Dendritic cell treated with granulocyte-macrophage colony-stimulating factor and Interleukin-4, amounts not matched to agents 40 ng/mL and 50 ng/mL, for 4 days (primary cell): ENCODE measurements at regions of chr2 and their contacts with region 1.

Region 1: GRCh38 chr2:167212014-167212648 is 323.9 kb downstream of the XIRP2 start:
- H3K4me3 Mint-ChIP-seq: no peak overlapping the region
- H3K27ac Mint-ChIP-seq: no peak overlapping the region
- H3K4me1 Mint-ChIP-seq: no peaks in the 10 kb centered on the region
- H3K27me3 Mint-ChIP-seq: no peaks in the 10 kb centered on the region

Region 2: GRCh38 chr2:166539340-166540162 is 672.6 kb before region 1 on chr2:
- intact Hi-C with region 1: loop called (anchors 1 kb)
- H3K4me3 Mint-ChIP-seq: no peak overlapping the region
- H3K27ac Mint-ChIP-seq: no peak overlapping the region
- H3K4me1 Mint-ChIP-seq: peaks cover 4% of the 10 kb centered on the region
- H3K27me3 Mint-ChIP-seq: no peaks in the 10 kb centered on the region

Region 3: DNA sequence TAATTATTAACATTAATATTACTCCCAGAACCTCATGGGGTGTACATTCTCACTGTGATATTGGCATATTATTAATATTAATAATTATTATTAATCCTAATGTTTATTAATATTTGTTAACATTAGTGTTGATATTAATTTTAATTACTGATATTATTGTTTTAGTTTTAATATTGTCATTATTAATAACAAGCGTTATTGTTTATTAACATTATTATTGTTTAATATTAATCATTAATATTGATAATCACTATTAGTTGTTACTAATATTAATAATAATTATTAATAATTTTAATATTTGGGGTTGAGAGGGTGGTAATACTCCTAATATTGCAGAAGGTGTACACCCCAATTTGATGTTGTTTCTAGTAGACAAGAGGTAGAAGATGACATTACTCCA is 517.0 kb before region 1 on chr2:
- intact Hi-C with region 1: loop called (anchors 5 kb)
- H3K4me3 Mint-ChIP-seq: no peak overlapping the region
- H3K27ac Mint-ChIP-seq: no peak overlapping the region
- H3K4me1 Mint-ChIP-seq: no peaks in the 10 kb centered on the region
- H3K27me3 Mint-ChIP-seq: no peaks in the 10 kb centered on the region

Region 4: GRCh38 chr2:167342769-167343168 is 130.6 kb after region 1 on chr2:
- intact Hi-C with region 1: no loop called
- H3K4me3 Mint-ChIP-seq: no peak overlapping the region
- H3K27ac Mint-ChIP-seq: no peak overlapping the region
- H3K4me1 Mint-ChIP-seq: no peaks in the 10 kb centered on the region
- H3K27me3 Mint-ChIP-seq: no peaks in the 10 kb centered on the region